ENCODE measurements at regions of chr12 and their contacts with region 1.

Region 1: GRCh38 chr12:102300824-102301461 is 103.3 kb upstream of the PMCH start:
- DNase-seq: no peak
- ATAC-seq: no peak

Region 2: DNA sequence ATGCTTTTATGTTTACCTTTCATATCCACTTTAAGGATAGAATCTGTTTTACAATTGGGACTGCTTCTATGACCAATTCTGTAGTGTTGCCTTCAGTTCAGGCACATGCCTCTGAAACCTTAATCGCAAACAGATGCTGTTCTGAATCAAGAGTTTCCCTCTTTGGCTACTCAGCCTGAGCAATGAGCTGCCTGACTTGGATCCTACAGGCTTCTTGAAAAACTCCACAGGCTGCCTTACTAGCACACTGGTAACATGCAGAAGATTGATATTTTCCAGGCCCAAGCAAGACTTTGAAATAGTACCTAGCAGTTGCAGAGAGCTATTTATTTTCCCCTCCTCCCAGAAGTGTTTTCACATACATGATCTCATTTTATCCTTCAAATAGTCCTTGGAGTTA is 68.5 kb before region 1 on chr12:
- intact Hi-C with region 1: no loop called
- DNase-seq: no peak
- ATAC-seq: peak; percentile 94

Region 3: DNA sequence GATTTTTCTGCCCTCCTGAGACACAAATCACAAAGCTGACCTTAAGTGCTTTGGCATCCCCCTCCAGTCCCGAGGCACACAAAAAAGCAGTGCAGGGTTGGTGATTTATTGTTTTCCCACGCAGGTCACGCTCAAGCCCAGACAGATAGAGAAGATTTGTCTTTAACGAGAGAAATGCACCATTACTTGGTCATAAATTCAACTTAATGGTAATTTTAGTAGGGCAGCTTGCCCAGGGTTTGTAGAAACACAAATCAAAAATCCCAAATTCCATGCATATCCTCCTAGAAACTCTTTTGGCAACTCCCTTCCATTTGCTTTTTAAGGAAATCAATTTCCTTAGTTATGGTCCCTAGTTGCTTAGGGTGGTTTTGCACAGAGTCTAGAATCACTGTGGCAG is 46.9 kb after region 1 on chr12:
- intact Hi-C with region 1: no loop called
- DNase-seq: no peak
- ATAC-seq: no peak

Region 4: GRCh38 chr12:103249612-103250011 is 948.7 kb after region 1 on chr12:
- intact Hi-C with region 1: loop called (anchors 10 kb)
- DNase-seq: no peak
- ATAC-seq: no peak

Measured in sciatic nerve (tissue), 2 donors.